GM10248 (cell line): ENCODE measurements at regions of chr1 and their contacts with region 1.

Region 1: GRCh38 chr1:200558866-200559459 is 61.6 kb downstream of the KIF14 start:
- DNase-seq: peak; percentile 46
- CTCF ChIP-seq: peak; percentile 58

Region 2: DNA sequence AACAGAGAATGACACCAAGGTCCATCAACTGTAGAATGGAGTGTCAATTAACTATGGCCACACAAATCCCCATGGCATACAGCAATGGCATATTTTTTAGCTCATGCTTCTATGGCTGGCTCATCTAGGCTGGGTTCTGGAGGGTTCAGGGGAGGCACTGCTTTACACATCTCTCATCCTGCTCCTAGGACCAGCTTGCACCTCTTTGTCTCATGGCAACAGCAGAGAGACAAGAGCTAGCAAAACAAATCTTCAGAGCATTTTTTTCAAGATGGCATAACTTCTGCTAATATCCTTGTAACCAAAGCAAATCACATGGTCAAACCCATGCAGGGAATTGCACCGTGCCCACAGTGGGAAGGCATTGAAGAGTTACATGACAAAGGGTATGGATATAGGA is 20.8 kb before region 1 on chr1:
- CTCF ChIA-PET with region 1: interaction called, 10 read pairs
- POLR2A ChIA-PET with region 1: no interaction called
- DNase-seq: no peak
- CTCF ChIP-seq: no peak

Region 3: DNA sequence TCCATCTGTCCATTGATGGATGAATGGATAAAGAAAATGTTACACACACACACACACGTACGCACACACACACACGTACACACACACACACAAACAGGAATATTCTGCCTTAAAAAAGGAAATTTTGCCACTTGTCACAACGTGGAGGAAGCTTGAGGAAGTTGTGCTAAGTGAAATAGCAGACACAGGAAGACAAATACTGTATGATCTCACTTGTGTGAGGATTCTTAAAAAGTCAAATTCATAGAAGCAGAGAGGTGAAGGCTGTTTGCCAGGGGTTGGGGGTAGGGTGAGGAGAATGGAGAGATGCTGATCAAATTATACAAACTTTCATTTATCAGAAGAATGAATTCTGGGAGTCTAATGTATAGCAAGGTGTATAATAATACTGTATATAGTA is 11.6 kb before region 1 on chr1:
- CTCF ChIA-PET with region 1: interaction called, 47 read pairs
- POLR2A ChIA-PET with region 1: no interaction called
- DNase-seq: no peak
- CTCF ChIP-seq: no peak

Region 4: DNA sequence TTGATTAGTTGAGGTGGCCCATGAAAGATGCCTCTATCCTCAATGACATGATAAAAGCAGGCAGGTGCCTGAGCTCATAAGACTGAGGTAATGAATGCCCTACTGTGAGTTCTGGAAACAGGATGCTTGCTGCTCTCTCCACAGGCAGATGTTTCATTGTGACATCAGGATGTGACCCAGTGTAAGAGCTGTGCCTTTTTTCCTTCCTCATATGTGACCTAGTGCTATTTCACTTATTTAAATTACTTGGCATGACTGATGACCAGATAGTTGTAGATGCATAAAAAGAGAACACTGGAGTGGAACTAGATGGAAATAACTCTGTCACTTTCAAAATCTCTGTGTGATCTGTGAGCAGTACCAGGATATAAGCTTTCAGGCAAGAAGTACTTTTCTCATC is 29.7 kb after region 1 on chr1:
- CTCF ChIA-PET with region 1: interaction called, 12 read pairs
- POLR2A ChIA-PET with region 1: no interaction called
- DNase-seq: peak; percentile 17
- CTCF ChIP-seq: no peak

Region 5: GRCh38 chr1:200802865-200803512 is 244.0 kb after region 1 on chr1:
- CTCF ChIA-PET with region 1: interaction called, 32 read pairs
- POLR2A ChIA-PET with region 1: no interaction called
- DNase-seq: peak; percentile 58
- CTCF ChIP-seq: peak; percentile 97

Region 6: GRCh38 chr1:200837931-200838571 is 279.1 kb after region 1 on chr1:
- CTCF ChIA-PET with region 1: interaction called, 10 read pairs
- POLR2A ChIA-PET with region 1: no interaction called
- DNase-seq: no peak
- CTCF ChIP-seq: peak; percentile 28

Region 7: GRCh38 chr1:201114236-201115131 is 555.5 kb after region 1 on chr1:
- CTCF ChIA-PET with region 1: interaction called, 16 read pairs
- POLR2A ChIA-PET with region 1: no interaction called
- DNase-seq: peak; percentile 87
- CTCF ChIP-seq: peak; percentile 86